Activated CD8-positive, alpha-beta T cell treated with anti-CD3 and anti-CD28 coated beads for 36 hours (primary cell): ENCODE measurements at regions of chr16 and their contacts with region 1.

Region 1: DNA sequence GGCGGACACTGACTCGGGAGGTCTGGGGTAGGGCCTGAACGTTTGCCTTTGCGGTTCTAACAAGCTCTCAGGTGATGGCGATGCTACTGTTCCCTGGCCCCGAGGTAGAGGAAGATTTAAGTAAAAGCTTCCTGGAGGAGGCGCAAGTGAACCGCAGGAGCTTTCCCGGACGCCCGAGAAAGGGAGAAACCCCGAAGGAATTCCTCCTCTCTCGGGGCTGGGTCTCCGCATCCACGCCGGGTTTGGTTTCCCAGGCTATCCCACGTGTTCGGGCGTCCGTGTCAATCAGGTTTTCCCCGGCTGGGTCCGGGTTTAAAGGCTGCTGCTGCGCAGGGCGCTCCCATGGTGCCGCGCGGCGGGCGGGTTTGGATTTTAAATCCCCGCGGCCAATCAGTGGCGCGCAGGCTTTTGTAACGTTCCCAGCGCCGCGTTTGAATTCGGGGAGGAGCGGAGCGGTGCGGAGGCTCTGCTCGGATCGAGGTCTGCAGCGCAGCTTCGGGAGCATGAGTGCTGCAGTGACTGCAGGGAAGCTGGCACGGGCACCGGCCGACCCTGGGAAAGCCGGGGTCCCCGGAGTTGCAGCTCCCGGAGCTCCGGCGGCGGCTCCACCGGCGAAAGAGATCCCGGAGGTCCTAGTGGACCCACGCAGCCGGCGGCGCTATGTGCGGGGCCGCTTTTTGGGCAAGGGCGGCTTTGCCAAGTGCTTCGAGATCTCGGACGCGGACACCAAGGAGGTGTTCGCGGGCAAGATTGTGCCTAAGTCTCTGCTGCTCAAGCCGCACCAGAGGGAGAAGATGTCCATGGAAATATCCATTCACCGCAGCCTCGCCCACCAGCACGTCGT is at the start of gene PLK1:
- DNase-seq: peak; percentile 92
- ATAC-seq: peak; percentile 98
- H3K4me3 Mint-ChIP-seq: peak within 1 kb of the TSS; percentile 93
- H3K27ac Mint-ChIP-seq: peak within 1 kb of the TSS; percentile 63
- H3K4me1 Mint-ChIP-seq: peaks cover 12% of the 10 kb centered on the region
- H3K27me3 Mint-ChIP-seq: no peaks in the 10 kb centered on the region
- CTCF ChIP-seq: no peak
- total RNA-seq, gene PLK1: 85.8 to 87.9 TPM

Region 2: GRCh38 chr16:23640931-23641765 is 37.5 kb before region 1 on chr16 and contains the starts of genes DCTN5 and PALB2:
- CTCF ChIA-PET with region 1: no interaction called
- POLR2A ChIA-PET with region 1: interaction called, 10 read pairs
- intact Hi-C with region 1: no loop called
- DNase-seq: peak; percentile 94
- ATAC-seq: peak; percentile 99
- H3K4me3 Mint-ChIP-seq: peak within 1 kb of the TSS; percentile 100
- H3K27ac Mint-ChIP-seq: peak within 1 kb of the TSS; percentile 97
- H3K4me1 Mint-ChIP-seq: peaks cover 27% of the 10 kb centered on the region
- H3K27me3 Mint-ChIP-seq: no peaks in the 10 kb centered on the region
- CTCF ChIP-seq: no peak
- total RNA-seq, gene DCTN5: 51.3 to 54.1 TPM
- total RNA-seq, gene PALB2: 22.9 to 24.0 TPM

Region 3: GRCh38 chr16:23691482-23692189 is 13.0 kb after region 1 on chr16:
- CTCF ChIA-PET with region 1: no interaction called
- POLR2A ChIA-PET with region 1: interaction called, 19 read pairs
- intact Hi-C with region 1: no loop called
- DNase-seq: no peak
- ATAC-seq: no peak
- H3K4me3 Mint-ChIP-seq: no peak overlapping the region
- H3K27ac Mint-ChIP-seq: no peak overlapping the region
- H3K4me1 Mint-ChIP-seq: peaks cover 5% of the 10 kb centered on the region
- H3K27me3 Mint-ChIP-seq: peaks cover 7% of the 10 kb centered on the region
- CTCF ChIP-seq: no peak